Heart right ventricle (tissue), 16 donors: ENCODE measurements at regions of chr6 and their contacts with region 1.

Region 1: DNA sequence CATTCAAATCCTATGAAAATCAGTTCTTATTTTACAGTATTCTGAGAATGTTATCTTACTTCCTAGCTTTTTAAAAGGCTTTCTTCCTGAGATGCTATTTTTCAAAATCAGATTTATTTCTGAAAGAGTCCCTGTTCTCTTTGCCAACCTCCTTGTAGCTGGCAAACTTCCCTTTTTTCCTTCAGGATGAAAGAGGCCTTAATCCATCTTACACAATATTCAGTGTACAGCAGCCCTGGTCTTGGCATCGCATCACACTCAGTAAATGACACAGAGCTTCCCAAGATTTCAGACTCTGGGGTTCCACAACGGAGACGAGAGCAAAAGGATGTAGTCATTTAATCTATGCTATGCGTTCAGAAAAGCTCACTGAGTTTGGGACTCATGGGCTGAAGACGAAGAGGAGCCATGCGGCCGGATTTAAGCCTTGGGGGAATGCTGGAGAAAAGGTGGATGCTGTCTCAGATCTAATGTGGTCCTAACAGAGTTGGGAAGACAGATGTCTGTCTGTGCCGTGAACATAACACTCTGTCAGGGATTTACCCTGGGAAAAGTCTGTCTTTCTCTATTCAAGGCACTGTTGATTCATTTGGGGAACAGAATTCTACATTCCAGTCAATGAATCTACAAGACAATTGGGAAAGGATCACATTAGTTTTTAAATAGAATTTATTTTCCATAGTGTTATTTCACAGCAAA is 616.4 kb upstream of the AGPAT4 start:
- DNase-seq: no peak
- ATAC-seq: no peak
- H3K4me3 ChIP-seq: peak overlapping the region in 2 of 10 donors; percentile 29 to 33
- H3K27ac ChIP-seq: no peak overlapping the region
- H3K4me1 ChIP-seq: peaks cover 0 to 5% (median 0%) of the 10 kb centered on the region in 9 donors
- H3K27me3 ChIP-seq: no peaks in the 10 kb centered on the region
- CTCF ChIP-seq: no peak

Region 2: GRCh38 chr6:161761966-161762365 is 128.3 kb before region 1 on chr6:
- intact Hi-C with region 1: no loop called
- DNase-seq: no peak
- ATAC-seq: no peak
- H3K4me3 ChIP-seq: no peak overlapping the region
- H3K27ac ChIP-seq: no peak overlapping the region
- H3K4me1 ChIP-seq: no peaks in the 10 kb centered on the region
- H3K27me3 ChIP-seq: no peaks in the 10 kb centered on the region
- CTCF ChIP-seq: no peak

Region 3: DNA sequence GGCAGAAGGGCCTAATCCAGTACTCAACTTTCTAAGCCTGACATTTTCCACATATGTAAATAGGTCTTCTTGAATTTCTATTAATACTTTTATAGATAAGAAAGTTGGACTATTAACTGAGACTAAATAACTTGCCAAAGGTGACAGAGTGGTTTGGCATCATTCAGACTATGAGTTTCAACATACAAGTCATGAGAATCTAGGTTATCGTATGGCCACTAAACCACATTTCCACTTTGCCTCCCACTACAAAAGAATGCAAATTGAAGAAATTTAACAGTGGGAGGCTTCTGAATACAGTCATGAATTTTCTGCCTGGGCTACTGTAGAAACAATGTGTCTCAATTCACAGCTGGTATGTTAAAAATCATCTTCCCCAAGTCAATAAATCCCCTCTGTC is 85.4 kb before region 1 on chr6:
- intact Hi-C with region 1: no loop called
- DNase-seq: no peak
- ATAC-seq: peak in 1 of 8 donors; percentile 46
- H3K4me3 ChIP-seq: no peak overlapping the region
- H3K27ac ChIP-seq: no peak overlapping the region
- H3K4me1 ChIP-seq: peaks cover 0 to 10% (median 0%) of the 10 kb centered on the region in 9 donors
- H3K27me3 ChIP-seq: no peaks in the 10 kb centered on the region
- CTCF ChIP-seq: no peak

Region 4: GRCh38 chr6:161829291-161829729 is 61.0 kb before region 1 on chr6:
- intact Hi-C with region 1: no loop called
- DNase-seq: no peak
- ATAC-seq: no peak
- H3K4me3 ChIP-seq: no peak overlapping the region
- H3K27ac ChIP-seq: no peak overlapping the region
- H3K4me1 ChIP-seq: no peaks in the 10 kb centered on the region
- H3K27me3 ChIP-seq: no peaks in the 10 kb centered on the region
- CTCF ChIP-seq: no peak

Region 5: DNA sequence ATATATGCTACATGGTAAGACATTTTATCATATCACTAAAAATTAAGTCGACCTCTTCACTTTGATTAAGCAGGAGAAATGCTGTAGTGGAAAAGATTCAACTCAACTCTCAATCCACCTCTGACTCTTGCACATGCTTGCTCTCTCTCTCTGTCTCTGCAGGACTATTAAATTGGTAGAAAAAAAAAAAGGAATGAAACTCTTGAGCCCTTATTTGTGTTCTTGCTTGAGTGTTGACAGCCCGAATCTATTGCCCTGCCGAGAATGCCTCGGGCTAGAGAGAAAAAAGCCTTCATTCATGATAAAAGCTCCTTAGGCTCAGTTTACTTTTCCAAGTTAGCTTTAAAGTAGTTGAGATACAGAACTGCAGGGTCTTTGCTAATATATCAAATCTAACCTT is 115.1 kb after region 1 on chr6:
- intact Hi-C with region 1: loop called in 1 of 10 experiments (anchors 10 kb)
- DNase-seq: no peak
- ATAC-seq: no peak
- H3K4me3 ChIP-seq: no peak overlapping the region
- H3K27ac ChIP-seq: no peak overlapping the region
- H3K4me1 ChIP-seq: no peaks in the 10 kb centered on the region
- H3K27me3 ChIP-seq: no peaks in the 10 kb centered on the region
- CTCF ChIP-seq: no peak

Region 6: GRCh38 chr6:162074641-162075275 is 184.5 kb after region 1 on chr6:
- intact Hi-C with region 1: no loop called
- DNase-seq: no peak
- ATAC-seq: peak in 2 of 8 donors; percentile 33 to 40
- H3K4me3 ChIP-seq: no peak overlapping the region
- H3K27ac ChIP-seq: no peak overlapping the region
- H3K4me1 ChIP-seq: peaks cover 0 to 11% (median 0%) of the 10 kb centered on the region in 9 donors
- H3K27me3 ChIP-seq: no peaks in the 10 kb centered on the region
- CTCF ChIP-seq: no peak